ENCODE measurements at regions of chr19 and their contacts with region 1.

Region 1: GRCh38 chr19:19865739-19866481 is at the start of gene ZNF253:
- DNase-seq: peak; percentile 99
- ATAC-seq: peak; percentile 79
- H3K4me3 Mint-ChIP-seq: peak within 1 kb of the TSS; percentile 100
- H3K27ac Mint-ChIP-seq: peak within 1 kb of the TSS; percentile 100
- H3K4me1 Mint-ChIP-seq: peaks cover 29% of the 10 kb centered on the region
- H3K27me3 Mint-ChIP-seq: no peaks in the 10 kb centered on the region; the same call in 1 of the 2 replicates
- CTCF ChIP-seq: no peak
- total RNA-seq, gene ZNF253: 31.9 to 43.6 TPM (median 37.0 TPM) in 3 replicates

Region 2: DNA sequence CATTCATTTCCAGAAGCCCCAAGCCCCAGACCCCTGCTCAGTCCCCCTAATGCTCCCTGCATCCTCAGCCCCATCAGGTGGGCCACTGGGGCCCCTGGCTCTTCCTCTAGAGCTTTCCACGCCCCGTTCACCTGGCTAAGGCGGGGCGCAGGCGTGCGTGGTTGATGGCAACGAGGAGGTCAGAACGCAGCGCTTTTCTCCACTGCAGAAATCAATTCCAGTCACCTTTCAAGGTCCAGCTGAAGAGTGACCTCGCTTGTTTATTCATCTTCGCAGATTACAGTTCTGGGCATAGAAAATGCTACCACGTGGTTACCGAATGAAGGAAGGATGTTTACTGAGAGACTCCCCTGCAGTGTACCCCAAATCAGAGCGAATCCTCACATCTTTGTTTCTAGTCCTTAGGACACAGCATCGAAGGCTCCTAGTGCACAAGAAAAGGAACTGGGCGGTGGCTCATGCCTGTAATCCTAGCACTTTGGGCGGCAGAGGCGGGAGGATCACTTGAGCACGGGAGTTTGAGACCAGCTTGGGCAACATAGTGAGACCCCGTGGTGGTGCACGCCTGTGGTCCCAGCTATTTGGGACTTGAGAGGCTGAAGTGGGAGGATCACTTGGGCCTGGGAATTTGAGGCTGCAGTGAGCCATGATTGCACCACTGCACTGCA is 246.6 kb before region 1 on chr19:
- CTCF ChIA-PET with region 1: no interaction called
- POLR2A ChIA-PET with region 1: no interaction called
- DNase-seq: no peak
- ATAC-seq: peak; percentile 2; the same call in 1 of the 2 replicates
- H3K4me3 Mint-ChIP-seq: peak overlapping the region; percentile 73
- H3K27ac Mint-ChIP-seq: no peak overlapping the region
- H3K4me1 Mint-ChIP-seq: peaks cover 13% of the 10 kb centered on the region
- H3K27me3 Mint-ChIP-seq: peaks cover 29% of the 10 kb centered on the region
- CTCF ChIP-seq: no peak

Region 3: GRCh38 chr19:19663256-19664038 is 202.5 kb before region 1 on chr19 and contains the start of gene ATP13A1:
- CTCF ChIA-PET with region 1: no interaction called
- POLR2A ChIA-PET with region 1: interaction called, 17 read pairs
- DNase-seq: peak; percentile 88
- ATAC-seq: peak; percentile 77
- H3K4me3 Mint-ChIP-seq: peak within 1 kb of the TSS; percentile 94
- H3K27ac Mint-ChIP-seq: peak within 1 kb of the TSS; percentile 97
- H3K4me1 Mint-ChIP-seq: peaks cover 23% of the 10 kb centered on the region
- H3K27me3 Mint-ChIP-seq: no peaks in the 10 kb centered on the region; the same call in 1 of the 2 replicates
- CTCF ChIP-seq: no peak
- total RNA-seq, gene ATP13A1: 63.4 to 82.6 TPM (median 64.3 TPM) in 3 replicates

Region 4: DNA sequence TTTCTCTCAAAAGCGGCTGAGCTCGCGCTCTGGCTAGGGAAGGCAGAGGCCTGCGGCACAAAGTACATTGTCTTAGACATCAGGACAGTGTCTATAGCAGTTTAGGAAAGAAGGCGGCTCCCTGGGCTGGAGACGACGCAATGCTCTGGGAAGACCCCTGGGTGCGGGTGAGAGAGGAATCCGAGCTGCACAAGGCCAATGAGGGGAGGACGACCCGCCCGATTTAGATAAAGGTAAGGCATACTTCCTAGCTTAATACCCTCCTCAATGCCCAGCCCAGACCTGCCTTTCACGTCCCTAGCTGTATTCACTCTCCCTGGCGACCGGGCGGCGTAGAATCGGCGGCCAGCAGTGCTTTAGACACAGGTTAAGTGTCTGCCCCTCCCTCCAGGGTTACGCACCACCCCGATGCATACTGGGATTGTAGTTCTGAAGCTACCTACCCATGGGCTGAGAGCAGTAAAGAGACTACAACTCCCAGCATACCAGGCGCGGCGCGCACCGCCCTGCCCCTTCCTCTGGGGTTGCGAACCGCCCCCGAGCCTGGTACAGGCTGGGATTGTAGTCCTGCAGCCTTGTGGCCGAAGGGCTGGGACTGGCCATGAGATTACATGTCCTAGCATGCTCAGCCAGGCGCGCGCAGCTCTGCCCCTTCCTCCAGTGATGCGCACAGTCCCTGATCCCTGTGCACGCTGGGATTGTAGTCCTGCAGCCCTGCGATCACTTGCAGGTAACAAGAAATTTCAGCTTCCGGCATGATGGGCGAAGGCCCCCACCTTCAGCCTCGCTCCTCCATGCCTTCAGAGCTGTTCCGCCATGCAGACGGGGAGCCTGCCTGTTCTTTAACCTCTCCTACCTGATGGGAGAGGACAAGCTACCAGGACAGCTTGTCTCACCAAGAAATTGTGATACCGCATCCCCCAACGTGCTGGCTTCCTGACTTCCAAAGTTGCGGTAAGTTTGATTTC is 89.6 kb before region 1 on chr19:
- CTCF ChIA-PET with region 1: interaction called, 5 read pairs
- POLR2A ChIA-PET with region 1: interaction called, 22 read pairs
- DNase-seq: peak; percentile 99
- ATAC-seq: peak; percentile 96
- H3K4me3 Mint-ChIP-seq: peak overlapping the region; percentile 98
- H3K27ac Mint-ChIP-seq: peak overlapping the region; percentile 95
- H3K4me1 Mint-ChIP-seq: peaks cover 25% of the 10 kb centered on the region
- H3K27me3 Mint-ChIP-seq: no peaks in the 10 kb centered on the region
- CTCF ChIP-seq: no peak

Region 5: DNA sequence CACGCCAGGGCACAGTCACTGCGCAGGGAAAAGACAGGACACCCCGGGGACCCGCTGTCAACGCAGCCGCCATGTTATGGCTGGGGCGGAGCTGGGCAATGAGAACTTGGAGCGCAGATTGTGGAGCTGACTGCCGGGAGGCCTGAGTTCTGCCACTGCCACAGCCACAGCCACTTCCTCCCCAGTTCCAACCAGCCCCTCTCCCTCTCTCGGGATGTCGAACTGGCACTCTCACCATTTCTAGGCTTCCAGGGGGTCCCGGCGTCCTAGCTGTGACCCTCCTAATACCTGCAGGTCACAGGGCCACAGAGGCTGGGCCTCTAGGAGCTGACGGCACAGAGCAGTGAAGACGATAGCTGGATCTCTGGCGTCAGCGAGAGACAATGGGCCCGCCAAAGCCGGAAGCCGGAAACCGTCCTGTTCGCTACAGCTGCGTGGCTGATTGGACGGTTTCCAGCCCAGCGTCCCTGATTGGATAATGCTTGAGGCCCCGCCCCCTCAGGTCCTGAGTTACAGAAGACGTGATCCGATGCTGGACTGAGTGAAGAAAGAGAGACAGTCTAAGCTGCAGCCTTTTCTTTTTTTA is 44.5 kb before region 1 on chr19 and contains the start of gene ZNF506:
- CTCF ChIA-PET with region 1: interaction called, 7 read pairs
- POLR2A ChIA-PET with region 1: interaction called, 32 read pairs
- DNase-seq: peak; percentile 97
- ATAC-seq: peak; percentile 97
- H3K4me3 Mint-ChIP-seq: peak within 1 kb of the TSS; percentile 100
- H3K27ac Mint-ChIP-seq: peak within 1 kb of the TSS; percentile 97
- H3K4me1 Mint-ChIP-seq: no peaks in the 10 kb centered on the region
- H3K27me3 Mint-ChIP-seq: peaks cover 10% of the 10 kb centered on the region
- CTCF ChIP-seq: no peak
- total RNA-seq, gene ZNF506: 15.7 to 20.8 TPM (median 17.9 TPM) in 3 replicates

Region 6: GRCh38 chr19:19956434-19957075 is 90.6 kb after region 1 on chr19:
- CTCF ChIA-PET with region 1: no interaction called
- POLR2A ChIA-PET with region 1: interaction called, 12 read pairs
- DNase-seq: peak; percentile 83
- ATAC-seq: peak; percentile 98
- H3K4me3 Mint-ChIP-seq: peak overlapping the region; percentile 68
- H3K27ac Mint-ChIP-seq: peak overlapping the region; percentile 82
- H3K4me1 Mint-ChIP-seq: peaks cover 6% of the 10 kb centered on the region
- H3K27me3 Mint-ChIP-seq: peaks cover 2% of the 10 kb centered on the region
- CTCF ChIP-seq: no peak